Naive thymus-derived CD8-positive, alpha-beta T cell (primary cell): ENCODE measurements at regions of chr17 and their contacts with region 1.

Region 1: DNA sequence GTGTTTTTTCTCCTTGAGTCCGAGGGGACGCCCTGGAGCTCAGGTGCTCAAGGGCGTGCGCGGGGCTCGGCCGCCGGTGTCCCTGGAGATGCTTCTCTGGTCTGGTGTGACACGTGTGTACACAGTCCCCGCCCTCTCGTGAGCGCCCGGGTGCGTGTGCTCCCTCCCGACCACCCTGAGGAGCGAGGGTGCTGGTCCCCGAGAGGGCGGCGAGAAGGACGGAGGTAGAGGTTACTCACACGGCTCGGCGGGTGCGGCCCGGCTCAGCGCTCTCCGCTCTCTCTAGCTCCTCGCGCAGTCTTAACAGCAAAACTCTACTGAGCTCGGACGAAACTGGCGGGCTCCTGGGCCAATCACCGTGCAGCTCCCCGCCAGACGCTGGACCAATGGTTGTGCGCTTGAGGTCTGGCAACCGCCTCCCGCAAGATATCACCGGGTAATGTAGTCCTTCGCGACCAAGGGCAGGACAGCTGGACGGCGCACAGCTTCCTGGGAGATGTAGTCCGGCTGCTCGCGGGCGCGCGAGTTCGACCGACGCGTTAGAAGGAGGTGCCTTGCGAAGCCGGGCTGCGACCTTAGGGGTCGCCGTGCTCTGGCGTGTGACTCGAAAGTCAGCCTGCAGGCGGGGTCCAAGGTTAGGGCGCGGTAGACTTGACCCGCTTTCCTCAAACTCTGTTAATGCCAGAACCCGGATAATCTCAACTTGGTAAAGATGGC is at the start of gene SLC25A19:
- DNase-seq: peak; percentile 86 to 99 (median 96)
- ATAC-seq: peak; percentile 90 to 92
- H3K4me3 Mint-ChIP-seq: peak within 1 kb of the TSS; percentile 95 to 100 (median 100)
- H3K27ac Mint-ChIP-seq: peak within 1 kb of the TSS; percentile 98 to 100 (median 100)
- H3K4me1 Mint-ChIP-seq: peaks cover 10 to 24% (median 19%) of the 10 kb centered on the region in 4 donors
- H3K27me3 Mint-ChIP-seq: no peaks in the 10 kb centered on the region
- polyA plus RNA-seq, gene SLC25A19: 11.2 to 15.4 (median 13.3) TPM

Region 2: GRCh38 chr17:75277664-75278071 is 11.6 kb before region 1 on chr17:
- POLR2A ChIA-PET with region 1: interaction called, 127 read pairs
- DNase-seq: no peak
- ATAC-seq: no peak
- H3K4me3 Mint-ChIP-seq: no peak overlapping the region
- H3K27ac Mint-ChIP-seq: no peak overlapping the region
- H3K4me1 Mint-ChIP-seq: peaks cover 2 to 12% (median 9%) of the 10 kb centered on the region in 4 donors
- H3K27me3 Mint-ChIP-seq: no peaks in the 10 kb centered on the region